OCI-LY7 (cell line): ENCODE measurements at regions of chr2 and their contacts with region 1.

Region 1: DNA sequence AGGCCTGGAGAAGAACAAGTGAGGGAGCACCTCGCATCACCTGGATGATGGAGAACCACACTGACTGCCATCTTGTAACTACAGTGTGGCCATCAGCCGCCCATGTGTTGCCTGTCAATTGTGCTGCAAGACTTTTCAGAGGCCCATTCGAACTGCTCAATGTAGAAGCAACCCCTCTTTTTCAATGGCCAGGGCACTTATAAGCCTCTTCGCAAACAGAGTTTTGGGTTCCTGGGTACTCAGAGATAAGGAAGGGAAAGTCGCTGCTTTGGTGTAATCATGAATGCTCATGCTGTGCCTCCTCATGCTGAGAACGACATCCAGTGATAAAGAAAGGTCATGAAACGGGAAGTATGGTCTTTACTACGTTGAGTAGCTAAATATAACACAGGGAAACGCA is 143.9 kb upstream of the SLC39A10 start:
- DNase-seq: no peak
- H3K4me3 ChIP-seq: no peak overlapping the region
- H3K27ac ChIP-seq: no peak overlapping the region
- H3K4me1 ChIP-seq: no peaks in the 10 kb centered on the region
- CTCF ChIP-seq: no peak

Region 2: DNA sequence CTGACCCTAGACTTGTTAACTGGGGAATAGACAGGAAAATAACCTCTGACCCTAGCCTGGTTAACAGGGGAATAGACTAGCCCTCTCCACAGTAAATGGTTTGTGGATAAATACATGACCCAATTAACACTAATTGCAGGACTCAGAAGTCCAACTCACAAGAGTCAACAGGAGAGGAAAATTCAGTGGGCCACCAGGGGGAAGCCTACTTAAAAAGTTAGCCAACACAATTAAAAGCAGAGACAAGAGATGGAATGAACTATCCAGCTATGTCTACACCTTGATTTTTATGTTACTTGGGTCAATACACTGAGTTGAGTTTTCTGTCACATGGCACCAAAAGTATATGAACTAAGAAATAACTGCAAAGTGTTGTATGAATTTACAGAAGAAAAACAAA is 14.9 kb before region 1 on chr2:
- CTCF ChIA-PET with region 1: no interaction called
- POLR2A ChIA-PET with region 1: interaction called, 24 read pairs
- intact Hi-C with region 1: no loop called
- DNase-seq: peak; percentile 67
- H3K4me3 ChIP-seq: no peak overlapping the region
- H3K27ac ChIP-seq: no peak overlapping the region
- H3K4me1 ChIP-seq: peaks cover 30% of the 10 kb centered on the region
- CTCF ChIP-seq: peak; percentile 84

Region 3: DNA sequence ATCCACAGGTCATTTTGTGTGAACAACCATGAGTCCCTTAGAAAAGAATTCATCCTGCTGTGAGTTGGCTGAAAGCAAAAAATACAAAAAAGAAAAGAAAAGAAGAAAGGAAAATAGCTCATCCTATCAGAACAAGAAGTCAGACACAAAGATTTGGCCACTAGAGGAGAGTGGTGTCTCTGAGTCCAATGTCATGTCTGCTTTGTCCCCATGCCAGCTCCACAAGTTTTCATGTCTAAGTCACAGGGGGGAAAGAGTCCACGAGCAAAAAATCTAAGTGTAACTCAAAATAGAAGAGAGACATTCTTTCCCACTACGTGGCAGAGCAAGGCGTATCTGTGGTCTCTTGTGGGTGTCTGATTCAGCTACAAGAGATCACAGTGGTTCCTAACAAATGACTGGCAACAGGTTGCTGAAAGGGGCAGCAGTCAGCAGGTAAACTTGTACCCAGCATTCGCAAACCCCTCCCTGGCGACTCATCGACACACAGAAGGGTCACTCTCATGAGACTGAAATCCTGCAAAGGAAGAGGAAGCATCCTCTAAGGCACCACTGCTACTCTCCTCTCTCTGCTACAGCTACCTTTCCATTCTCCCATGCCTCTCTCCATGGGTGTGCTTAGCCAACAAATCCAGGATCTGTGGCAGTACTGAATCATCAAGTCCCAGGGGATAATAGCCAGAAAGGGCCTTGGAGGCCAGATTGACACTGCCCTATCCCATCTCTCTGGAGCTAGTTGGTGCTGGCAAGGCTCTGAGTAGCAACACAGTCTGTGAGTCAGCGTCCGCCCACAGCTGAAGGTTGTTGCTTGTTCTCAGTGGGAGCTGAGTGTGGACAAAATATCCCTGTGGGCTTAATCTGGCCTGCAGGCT is 20.9 kb after region 1 on chr2:
- CTCF ChIA-PET with region 1: no interaction called
- POLR2A ChIA-PET with region 1: interaction called, 20 read pairs
- intact Hi-C with region 1: no loop called
- DNase-seq: peak; percentile 39
- H3K4me3 ChIP-seq: peak overlapping the region; percentile 64
- H3K27ac ChIP-seq: no peak overlapping the region
- H3K4me1 ChIP-seq: peaks cover 47% of the 10 kb centered on the region
- CTCF ChIP-seq: peak; percentile 53